Activated CD4-positive, alpha-beta memory T cell treated with anti-CD3 and anti-CD28 coated beads for 36 hours (primary cell): ENCODE measurements at regions of chr18 and their contacts with region 1.

Region 1: DNA sequence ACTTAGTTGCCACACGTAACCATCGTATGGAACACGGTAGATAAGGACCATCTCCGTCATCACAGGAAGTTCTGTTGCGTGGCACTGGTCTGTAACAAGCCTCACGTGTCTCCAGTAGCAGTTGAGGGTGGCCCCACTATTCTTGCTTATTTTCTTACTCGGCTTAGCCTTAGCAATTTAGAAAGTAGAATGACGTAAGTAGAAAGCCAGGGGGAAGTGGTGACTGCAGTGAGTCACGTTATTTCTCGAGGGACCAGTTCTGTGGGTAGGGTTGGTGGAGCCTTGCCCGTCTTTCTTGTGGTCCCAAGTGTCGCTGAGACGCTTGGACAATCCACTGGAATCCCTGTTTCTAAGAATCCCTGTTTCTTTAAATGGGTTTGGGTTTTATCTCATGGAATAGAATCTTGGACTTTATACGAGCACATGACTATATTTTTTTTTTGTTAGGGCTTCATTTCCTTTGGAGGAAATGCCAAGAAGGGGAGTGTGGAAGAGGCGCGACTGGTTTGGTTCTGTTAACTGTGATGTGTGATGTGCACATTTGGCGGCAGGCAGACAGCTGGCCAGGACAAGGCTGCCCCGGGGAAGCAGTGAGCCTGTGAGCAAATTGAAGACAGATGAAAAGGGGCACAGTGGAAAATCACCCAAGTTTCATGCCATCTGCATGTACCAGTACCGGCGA is 96.2 kb downstream of the CABLES1 start:
- DNase-seq: peak; percentile 87
- H3K4me3 Mint-ChIP-seq: peak overlapping the region; percentile 40
- H3K27ac Mint-ChIP-seq: peak overlapping the region; percentile 85
- H3K4me1 Mint-ChIP-seq: peaks cover 51% of the 10 kb centered on the region
- H3K27me3 Mint-ChIP-seq: peaks cover 3% of the 10 kb centered on the region

Region 2: GRCh38 chr18:21897811-21898210 is 1333.7 kb before region 1 on chr18:
- CTCF ChIA-PET with region 1: no interaction called
- POLR2A ChIA-PET with region 1: no interaction called
- intact Hi-C with region 1: no loop called
- DNase-seq: peak; percentile 19
- H3K4me3 Mint-ChIP-seq: no peak overlapping the region
- H3K27ac Mint-ChIP-seq: no peak overlapping the region
- H3K4me1 Mint-ChIP-seq: peaks cover 3% of the 10 kb centered on the region
- H3K27me3 Mint-ChIP-seq: peaks cover 14% of the 10 kb centered on the region

Region 3: GRCh38 chr18:22831441-22831904 is 400.0 kb before region 1 on chr18:
- CTCF ChIA-PET with region 1: no interaction called
- POLR2A ChIA-PET with region 1: no interaction called
- intact Hi-C with region 1: loop called (anchors 10 kb)
- DNase-seq: no peak
- H3K4me3 Mint-ChIP-seq: no peak overlapping the region
- H3K27ac Mint-ChIP-seq: no peak overlapping the region
- H3K4me1 Mint-ChIP-seq: peaks cover 1% of the 10 kb centered on the region
- H3K27me3 Mint-ChIP-seq: peaks cover 21% of the 10 kb centered on the region

Region 4: DNA sequence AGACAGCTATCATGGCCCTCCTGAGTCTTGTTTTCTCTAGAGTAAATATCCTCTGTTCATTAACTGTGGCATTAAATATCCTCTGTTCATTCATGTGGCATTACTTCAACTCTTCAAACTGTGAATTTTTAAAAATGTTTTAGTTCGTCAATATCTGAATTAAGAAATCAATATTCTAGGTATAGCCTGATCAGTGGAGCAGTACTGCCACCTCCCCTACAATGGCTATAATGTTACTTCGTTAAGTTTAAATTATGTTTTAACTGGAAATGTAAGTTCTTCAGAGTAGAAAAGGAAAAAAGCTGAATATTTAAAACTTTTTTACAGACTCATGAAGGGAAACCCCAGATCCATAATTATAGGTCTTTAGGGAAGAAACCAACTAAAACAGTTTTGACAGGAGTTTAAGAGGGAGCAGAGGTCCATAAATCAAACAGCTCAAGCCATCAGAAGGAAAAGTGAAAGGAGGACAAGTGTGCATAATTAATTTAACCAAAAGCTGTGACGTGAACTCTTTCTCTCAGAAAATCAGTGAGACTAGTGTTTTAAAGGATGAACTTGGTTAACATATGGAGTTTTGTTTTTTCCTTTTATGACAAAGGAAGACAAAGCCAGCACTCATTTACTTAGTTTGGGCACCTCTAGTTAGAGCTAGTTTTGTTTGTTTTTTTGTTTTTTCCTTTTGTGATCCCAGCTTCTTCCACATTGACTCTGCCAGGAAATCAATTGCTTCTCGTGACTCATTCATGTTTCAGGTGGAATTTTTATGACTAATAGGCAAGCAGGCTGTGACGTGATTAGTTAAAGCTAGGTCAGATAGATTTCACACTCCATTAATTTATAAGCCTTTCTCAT is 253.4 kb before region 1 on chr18:
- CTCF ChIA-PET with region 1: no interaction called
- POLR2A ChIA-PET with region 1: no interaction called
- intact Hi-C with region 1: loop called (anchors 5 kb)
- DNase-seq: no peak
- H3K4me3 Mint-ChIP-seq: peak overlapping the region; percentile 30
- H3K27ac Mint-ChIP-seq: peak overlapping the region; percentile 89
- H3K4me1 Mint-ChIP-seq: peaks cover 19% of the 10 kb centered on the region
- H3K27me3 Mint-ChIP-seq: no peaks in the 10 kb centered on the region

Region 5: DNA sequence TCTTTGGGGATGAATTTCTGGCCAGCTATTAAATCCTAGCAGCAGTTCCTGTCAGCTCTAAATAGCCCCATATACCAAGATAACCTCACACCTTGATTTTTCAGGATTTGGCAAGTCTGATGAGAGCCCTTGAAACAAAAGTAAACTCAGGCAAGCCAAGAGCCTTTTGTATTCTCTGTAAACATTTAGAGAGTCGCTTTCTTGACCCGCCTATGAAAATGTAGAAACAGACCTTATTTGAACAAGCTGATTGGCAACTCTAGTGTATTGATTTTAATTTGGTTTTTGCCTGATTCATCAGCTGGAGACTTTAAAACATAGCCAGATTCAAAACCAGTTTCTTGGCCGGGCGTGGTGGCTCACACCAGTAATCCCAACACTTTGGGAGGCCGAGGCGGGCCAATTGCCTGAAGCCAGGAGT is 52.8 kb before region 1 on chr18:
- CTCF ChIA-PET with region 1: no interaction called
- POLR2A ChIA-PET with region 1: no interaction called
- intact Hi-C with region 1: no loop called
- DNase-seq: no peak
- H3K4me3 Mint-ChIP-seq: no peak overlapping the region
- H3K27ac Mint-ChIP-seq: no peak overlapping the region
- H3K4me1 Mint-ChIP-seq: peaks cover 4% of the 10 kb centered on the region
- H3K27me3 Mint-ChIP-seq: no peaks in the 10 kb centered on the region

Region 6: DNA sequence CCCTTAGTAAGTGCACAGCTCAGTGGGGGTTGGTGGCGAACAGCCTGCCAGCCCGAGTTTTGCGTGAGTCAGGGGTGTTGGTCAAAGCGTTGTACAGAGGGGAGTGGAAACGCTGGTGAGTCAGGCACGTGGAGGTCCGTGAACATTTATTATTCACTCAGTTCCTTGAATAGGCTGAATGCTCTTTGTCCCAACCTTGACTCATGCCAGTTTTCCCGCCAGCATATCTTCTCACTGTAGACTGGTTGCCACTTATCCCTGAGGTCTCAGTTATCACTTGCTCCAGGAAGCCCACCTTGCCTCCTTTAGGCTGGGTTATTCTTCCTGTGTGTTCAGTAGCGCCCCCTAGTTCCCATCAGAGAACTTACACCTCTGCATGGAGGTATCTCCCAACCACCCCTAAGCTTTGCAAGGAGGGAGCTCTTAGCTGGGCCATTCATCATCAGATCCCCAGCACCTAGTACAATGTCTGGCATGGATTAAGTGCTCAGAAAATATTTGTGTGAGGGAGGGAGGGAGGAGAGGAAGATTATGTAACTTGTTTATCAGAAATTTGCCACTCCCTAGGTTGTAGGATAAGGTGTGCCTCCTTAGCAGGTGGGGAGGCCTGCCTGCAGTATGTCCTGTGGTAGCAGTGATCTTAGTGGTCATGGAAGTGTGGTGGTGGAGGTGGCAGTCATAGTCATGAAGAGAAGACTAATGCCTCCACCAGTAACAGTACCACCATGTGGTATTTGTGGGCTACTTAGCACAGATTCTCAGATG is 24.1 kb before region 1 on chr18:
- CTCF ChIA-PET with region 1: no interaction called
- POLR2A ChIA-PET with region 1: no interaction called
- intact Hi-C with region 1: loop called (anchors 1 kb)
- DNase-seq: no peak
- H3K4me3 Mint-ChIP-seq: no peak overlapping the region
- H3K27ac Mint-ChIP-seq: no peak overlapping the region
- H3K4me1 Mint-ChIP-seq: peaks cover 26% of the 10 kb centered on the region
- H3K27me3 Mint-ChIP-seq: peaks cover 12% of the 10 kb centered on the region

Region 7: GRCh38 chr18:23356915-23357601 is 125.6 kb after region 1 on chr18:
- CTCF ChIA-PET with region 1: no interaction called
- POLR2A ChIA-PET with region 1: no interaction called
- intact Hi-C with region 1: loop called (anchors 5 kb)
- DNase-seq: no peak
- H3K4me3 Mint-ChIP-seq: no peak overlapping the region
- H3K27ac Mint-ChIP-seq: no peak overlapping the region
- H3K4me1 Mint-ChIP-seq: peaks cover 10% of the 10 kb centered on the region
- H3K27me3 Mint-ChIP-seq: no peaks in the 10 kb centered on the region

Region 8: DNA sequence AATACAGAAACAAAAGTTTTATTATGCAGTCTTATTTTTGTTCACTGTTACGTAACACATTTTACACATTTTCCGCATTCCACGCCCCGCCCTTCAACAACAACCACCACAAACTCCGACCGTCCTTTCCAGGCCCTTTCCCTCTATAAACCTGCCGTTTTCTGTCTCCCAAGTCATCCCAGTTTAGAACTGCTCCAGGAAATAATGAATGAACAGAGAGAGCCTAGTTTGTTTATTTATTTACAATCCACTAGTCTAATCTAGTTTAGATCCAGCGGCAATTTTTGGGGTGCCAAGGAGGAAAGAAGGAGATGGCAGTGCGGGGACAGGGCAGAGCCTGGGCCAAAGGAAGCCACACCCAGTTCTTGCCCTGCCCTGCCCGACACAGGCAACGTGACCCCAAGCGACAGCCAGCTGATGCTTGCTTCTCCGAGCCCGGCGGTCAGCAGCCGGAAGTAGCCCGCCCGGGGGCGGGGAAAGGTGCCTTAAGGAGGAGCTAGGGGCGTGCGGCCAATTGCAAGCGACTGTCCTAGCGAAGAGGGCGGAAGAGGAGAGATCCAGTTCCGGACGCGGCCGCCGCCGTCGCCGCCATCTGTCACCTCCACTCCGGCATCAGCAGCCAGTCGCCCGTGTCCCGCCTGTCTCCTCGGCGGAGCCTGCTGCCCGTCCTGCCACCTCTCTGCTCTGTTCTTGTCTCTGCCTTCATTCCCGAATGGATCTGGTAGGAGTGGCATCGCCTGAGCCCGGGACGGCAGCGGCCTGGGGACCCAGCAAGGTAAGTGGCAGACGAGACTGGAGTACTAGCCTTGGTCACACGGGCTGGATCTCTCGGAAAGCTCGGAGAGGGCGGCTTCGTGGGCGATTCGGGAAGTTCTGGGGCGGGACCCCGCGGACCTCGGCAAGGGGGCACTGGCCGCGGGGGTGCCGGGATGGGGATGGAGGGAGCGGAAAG is 221.5 kb after region 1 on chr18 and contains the start of gene RIOK3:
- CTCF ChIA-PET with region 1: no interaction called
- POLR2A ChIA-PET with region 1: no interaction called
- intact Hi-C with region 1: loop called (anchors 2 kb)
- DNase-seq: peak; percentile 97
- H3K4me3 Mint-ChIP-seq: peak within 1 kb of the TSS; percentile 98
- H3K27ac Mint-ChIP-seq: peak within 1 kb of the TSS; percentile 88
- H3K4me1 Mint-ChIP-seq: peaks cover 39% of the 10 kb centered on the region
- H3K27me3 Mint-ChIP-seq: peaks cover 2% of the 10 kb centered on the region
- total RNA-seq, gene RIOK3: 51.0 to 55.8 TPM